Gastrocnemius medialis (tissue), 4 donors: ENCODE measurements at regions of chr9 and their contacts with region 1.

Region 1: DNA sequence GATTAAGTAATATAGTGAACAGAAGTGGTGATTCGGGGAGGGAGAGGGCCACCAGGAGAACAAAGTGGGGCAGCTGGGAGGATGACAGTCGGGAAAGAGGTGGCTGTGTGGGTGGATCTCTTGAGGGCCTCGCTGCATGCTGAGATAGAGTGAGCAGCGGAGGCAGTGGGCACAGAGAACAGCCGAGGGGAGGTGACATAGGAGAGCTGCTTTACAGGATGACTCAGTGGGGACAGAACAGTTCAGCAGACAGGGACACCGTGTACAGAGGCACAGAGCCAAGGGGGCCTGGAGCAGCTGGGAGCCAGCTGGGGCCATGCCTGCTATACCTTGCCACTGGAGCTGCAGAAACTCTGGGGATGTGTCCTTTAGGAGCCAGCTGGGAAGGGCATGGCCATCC is 273.9 kb downstream of the GADD45G start:
- DNase-seq: peak; percentile 93 to 98
- ATAC-seq: peak; percentile 80 to 86
- H3K4me3 ChIP-seq: no peak overlapping the region
- H3K27ac ChIP-seq: peak overlapping the region; percentile 82 to 96 (median 90)
- H3K4me1 ChIP-seq: peaks cover 59 to 66% of the 10 kb centered on the region in 2 donors
- H3K27me3 ChIP-seq: no peaks in the 10 kb centered on the region
- CTCF ChIP-seq: no peak
- POLR2A ChIP-seq: peak; percentile 54 to 70

Region 2: GRCh38 chr9:89318123-89319014 is 560.3 kb before region 1 on chr9 and contains the start of gene SECISBP2:
- in situ Hi-C with region 1: no loop called
- intact Hi-C with region 1: loop called (anchors 10 kb)
- DNase-seq: peak; percentile 92 to 95
- ATAC-seq: peak; percentile 90 to 93
- H3K4me3 ChIP-seq: peak within 1 kb of the TSS; percentile 69 to 83 (median 80)
- H3K27ac ChIP-seq: peak within 1 kb of the TSS; percentile 87 to 99 (median 98)
- H3K4me1 ChIP-seq: peaks cover 39 to 40% of the 10 kb centered on the region in 2 donors
- H3K27me3 ChIP-seq: no peaks in the 10 kb centered on the region
- CTCF ChIP-seq: peak; percentile 62 to 73 (median 66)
- POLR2A ChIP-seq: peak; percentile 96 to 97
- total RNA-seq, gene SECISBP2: 40.2 to 70.8 (median 54.9) TPM

Region 3: DNA sequence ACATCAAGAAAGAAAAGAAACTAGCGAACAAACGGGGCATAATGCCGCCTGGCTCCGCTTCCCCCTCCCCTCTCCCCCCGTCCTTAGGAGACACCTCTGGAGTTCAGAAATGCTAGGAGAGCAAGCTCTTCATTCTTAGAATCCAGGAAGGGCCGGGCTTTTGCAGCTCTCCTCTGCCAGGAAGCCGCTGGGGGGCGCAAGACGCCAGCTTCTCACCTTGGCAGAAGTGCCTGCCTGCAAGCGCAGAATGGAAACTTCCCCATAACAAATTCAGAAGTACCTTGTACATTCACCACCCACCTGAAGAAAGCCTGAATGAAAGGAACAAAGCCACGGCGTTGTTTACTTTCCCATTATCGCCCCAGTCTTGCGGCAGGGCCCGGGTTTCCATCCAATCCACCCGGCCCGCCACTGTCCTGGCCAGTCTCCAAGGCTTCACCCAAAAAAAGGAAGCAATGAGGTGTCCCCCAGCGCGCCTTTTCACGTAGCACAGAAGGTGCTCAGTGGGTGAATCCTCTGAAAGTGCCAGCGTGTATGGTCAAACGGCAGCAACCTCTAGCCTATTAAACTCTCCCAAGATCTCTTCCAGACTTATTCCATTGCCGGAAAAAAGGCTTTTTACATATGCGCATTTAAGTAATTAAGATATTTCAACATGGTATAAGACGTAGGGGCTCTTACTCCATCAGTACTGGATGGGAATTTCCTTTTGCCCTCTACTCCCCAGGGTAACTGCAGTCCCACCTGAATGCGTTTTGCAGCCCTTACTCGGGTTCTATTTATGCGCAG is 275.5 kb before region 1 on chr9:
- in situ Hi-C with region 1: loop called (anchors 25 kb)
- intact Hi-C with region 1: loop called (anchors 2 kb)
- DNase-seq: peak; percentile 82 to 89
- ATAC-seq: peak; percentile 35 to 45
- H3K4me3 ChIP-seq: peak overlapping the region; percentile 73 to 84 (median 78)
- H3K27ac ChIP-seq: peak overlapping the region; percentile 92 to 94 (median 94)
- H3K4me1 ChIP-seq: peaks cover 11 to 19% of the 10 kb centered on the region in 2 donors
- H3K27me3 ChIP-seq: no peaks in the 10 kb centered on the region
- CTCF ChIP-seq: peak; percentile 86 to 92 (median 89)
- POLR2A ChIP-seq: no peak

Region 4: DNA sequence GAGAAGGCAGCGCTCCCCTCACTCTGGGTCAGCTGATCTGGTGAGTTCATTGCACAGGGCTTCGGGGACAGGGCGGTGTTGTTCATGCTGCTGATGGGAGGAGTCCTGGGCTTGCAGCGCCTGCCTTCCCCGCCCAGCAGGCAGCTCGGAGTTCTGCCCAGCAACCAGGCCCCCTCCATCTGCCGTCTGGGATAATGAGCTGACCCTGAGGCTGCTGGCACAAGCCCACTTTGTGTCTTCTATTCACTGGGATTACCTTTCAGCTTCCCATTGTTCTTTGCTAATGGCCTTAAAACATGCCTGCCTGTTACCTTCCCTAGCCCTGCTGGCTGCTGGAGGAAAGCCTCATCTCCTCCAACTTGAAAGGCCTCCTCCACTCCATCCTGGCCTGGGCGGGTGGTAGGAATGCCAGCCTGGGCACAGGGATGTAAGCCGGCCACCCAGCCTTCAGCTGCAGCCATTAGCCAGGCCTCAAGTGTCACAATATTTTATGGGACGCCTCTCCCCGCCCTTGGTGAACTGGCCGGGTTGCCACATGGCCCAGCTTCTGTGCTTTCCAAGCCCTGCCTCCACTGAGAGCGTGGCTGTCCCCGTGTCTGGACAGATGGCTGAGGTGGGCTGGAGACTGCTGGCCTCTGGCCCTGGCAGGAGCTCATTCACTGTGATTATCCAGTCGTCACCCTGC is 203.5 kb before region 1 on chr9:
- in situ Hi-C with region 1: no loop called
- intact Hi-C with region 1: loop called (anchors 5 kb)
- DNase-seq: peak; percentile 81 to 92
- ATAC-seq: peak; percentile 80 to 88
- H3K4me3 ChIP-seq: no peak overlapping the region
- H3K27ac ChIP-seq: peak overlapping the region; percentile 73 to 84 (median 84)
- H3K4me1 ChIP-seq: peaks cover 40 to 43% of the 10 kb centered on the region in 2 donors
- H3K27me3 ChIP-seq: no peaks in the 10 kb centered on the region
- CTCF ChIP-seq: no peak
- POLR2A ChIP-seq: no peak

Region 5: DNA sequence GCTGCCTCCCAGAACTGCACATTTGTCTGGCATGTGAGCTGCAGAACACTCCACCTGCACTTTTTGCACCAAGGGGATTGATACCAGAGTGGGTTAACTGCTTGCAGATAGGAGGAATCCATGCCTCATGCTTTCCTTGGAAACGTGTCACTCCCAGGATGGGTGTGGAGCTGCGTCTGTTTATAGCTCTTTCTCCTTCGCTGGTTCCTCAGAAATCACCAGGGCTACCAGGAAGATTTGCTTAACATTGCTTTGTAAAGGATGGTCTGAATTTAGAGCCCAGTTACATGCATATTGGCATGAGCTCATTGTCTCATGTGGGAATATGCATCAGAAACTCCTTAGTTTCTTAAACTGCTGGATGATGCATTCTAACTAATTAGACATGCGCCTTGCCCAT is 39.2 kb before region 1 on chr9:
- in situ Hi-C with region 1: no loop called
- intact Hi-C with region 1: no loop called
- DNase-seq: no peak
- ATAC-seq: no peak
- H3K4me3 ChIP-seq: no peak overlapping the region
- H3K27ac ChIP-seq: no peak overlapping the region
- H3K4me1 ChIP-seq: no peaks in the 10 kb centered on the region
- H3K27me3 ChIP-seq: no peaks in the 10 kb centered on the region
- CTCF ChIP-seq: no peak
- POLR2A ChIP-seq: no peak

Region 6: GRCh38 chr9:89952401-89952800 is 73.7 kb after region 1 on chr9:
- in situ Hi-C with region 1: no loop called
- intact Hi-C with region 1: no loop called
- DNase-seq: no peak
- ATAC-seq: no peak
- H3K4me3 ChIP-seq: no peak overlapping the region
- H3K27ac ChIP-seq: no peak overlapping the region
- H3K4me1 ChIP-seq: peaks cover 0 to 11% of the 10 kb centered on the region in 2 donors
- H3K27me3 ChIP-seq: no peaks in the 10 kb centered on the region
- CTCF ChIP-seq: no peak
- POLR2A ChIP-seq: no peak

Region 7: DNA sequence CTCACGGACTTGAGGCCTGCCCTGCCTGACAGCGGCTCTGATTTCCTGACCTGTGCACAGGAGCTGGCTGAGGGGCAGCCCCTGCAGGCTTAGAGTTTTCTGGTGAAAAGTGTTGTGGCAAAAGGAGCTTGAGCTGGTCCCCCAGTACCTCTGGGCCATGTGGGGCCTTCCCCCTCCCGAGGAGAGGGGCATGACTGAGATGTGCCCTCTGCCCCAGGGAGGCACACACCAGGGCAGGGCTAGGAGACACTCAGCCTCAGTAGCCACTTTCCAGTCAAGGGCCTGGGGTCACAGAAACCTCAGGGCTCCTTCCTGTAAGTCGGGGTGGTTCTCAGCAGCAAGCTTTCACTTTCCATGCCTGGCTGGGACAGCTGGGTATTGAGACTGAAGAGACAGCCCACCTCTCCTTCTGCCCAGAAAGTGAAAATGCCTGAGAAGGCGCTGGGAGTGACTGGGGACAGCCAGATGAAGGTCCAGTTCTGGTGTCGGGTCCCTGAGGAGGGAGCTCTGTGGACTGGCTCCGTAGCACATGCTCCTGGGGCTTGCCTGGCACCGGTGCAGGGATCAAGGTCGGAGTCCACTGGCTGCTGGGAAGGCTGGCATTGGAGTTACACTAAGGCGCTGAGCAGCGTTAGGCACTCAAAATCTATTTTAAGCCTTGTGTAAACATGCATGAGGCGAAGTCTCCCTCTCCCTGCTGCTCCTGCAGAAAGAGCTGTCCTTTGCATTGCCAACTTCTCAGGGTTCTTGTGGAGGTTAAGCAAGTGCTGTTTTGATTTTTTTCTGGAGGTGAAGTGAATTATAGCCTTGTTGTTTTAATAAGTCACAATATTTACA is 121.1 kb after region 1 on chr9:
- in situ Hi-C with region 1: no loop called
- intact Hi-C with region 1: loop called (anchors 10 kb)
- DNase-seq: peak; percentile 82 to 89
- ATAC-seq: peak; percentile 94 to 96
- H3K4me3 ChIP-seq: peak overlapping the region in 3 of 4 donors; percentile 36 to 42 (median 41)
- H3K27ac ChIP-seq: peak overlapping the region; percentile 72 to 89 (median 82)
- H3K4me1 ChIP-seq: peaks cover 45 to 46% of the 10 kb centered on the region in 2 donors
- H3K27me3 ChIP-seq: no peaks in the 10 kb centered on the region
- CTCF ChIP-seq: peak in 1 of 5 experiments; percentile 7
- POLR2A ChIP-seq: no peak